ENCODE measurements at regions of chr5 and their contacts with region 1.

Region 1: GRCh38 chr5:76601470-76601869 is 21.7 kb downstream of the F2RL2 start:
- DNase-seq: no peak
- ATAC-seq: peak; percentile 84
- H3K4me3 ChIP-seq: no peak overlapping the region
- H3K27ac ChIP-seq: no peak overlapping the region
- H3K4me1 ChIP-seq: no peaks in the 10 kb centered on the region
- H3K27me3 ChIP-seq: no peaks in the 10 kb centered on the region
- CTCF ChIP-seq: peak; percentile 72

Region 2: GRCh38 chr5:76457674-76458485 is 143.6 kb before region 1 on chr5:
- CTCF ChIA-PET with region 1: no interaction called
- POLR2A ChIA-PET with region 1: no interaction called
- in situ Hi-C with region 1: no loop called
- intact Hi-C with region 1: no loop called
- DNase-seq: no peak
- ATAC-seq: no peak
- H3K4me3 ChIP-seq: no peak overlapping the region
- H3K27ac ChIP-seq: no peak overlapping the region
- H3K4me1 ChIP-seq: no peaks in the 10 kb centered on the region
- H3K27me3 ChIP-seq: peaks cover 12% of the 10 kb centered on the region; the same call in 1 of the 2 replicates
- CTCF ChIP-seq: no peak

Region 3: DNA sequence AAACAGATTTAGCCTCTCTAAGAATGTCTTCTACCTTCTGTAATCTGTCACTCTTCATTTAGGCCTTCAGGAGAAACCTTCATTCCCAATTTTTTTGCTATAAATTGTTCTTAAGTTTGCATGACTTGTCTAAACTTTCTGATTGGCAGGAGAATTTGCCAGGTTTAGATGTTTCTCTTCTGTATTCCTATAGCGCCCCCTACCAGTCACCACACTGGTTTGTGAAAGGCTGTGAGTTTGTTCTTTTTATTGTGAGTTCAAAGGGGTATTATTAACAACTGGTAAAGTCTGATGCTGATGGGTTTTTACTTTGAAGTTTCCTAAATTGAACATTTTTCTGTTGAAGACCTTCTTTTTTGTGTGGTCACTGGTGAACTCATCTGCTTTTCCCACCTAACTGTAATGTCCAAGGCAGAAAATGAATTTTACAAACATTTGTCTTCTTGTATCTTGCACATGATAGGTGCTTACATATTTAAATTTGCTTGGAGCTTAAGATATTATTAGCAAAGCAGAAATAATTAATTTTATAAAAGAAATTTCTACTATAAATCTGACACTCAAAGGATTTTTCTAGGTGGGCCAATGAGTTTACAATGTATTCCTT is 40.1 kb after region 1 on chr5:
- CTCF ChIA-PET with region 1: no interaction called
- POLR2A ChIA-PET with region 1: no interaction called
- in situ Hi-C with region 1: no loop called
- intact Hi-C with region 1: loop called (anchors 1 kb)
- DNase-seq: peak; percentile 33
- ATAC-seq: no peak
- H3K4me3 ChIP-seq: no peak overlapping the region
- H3K27ac ChIP-seq: no peak overlapping the region
- H3K4me1 ChIP-seq: no peaks in the 10 kb centered on the region
- H3K27me3 ChIP-seq: no peaks in the 10 kb centered on the region
- CTCF ChIP-seq: peak; percentile 74; the same call in 1 of the 2 replicates

Region 4: GRCh38 chr5:76715736-76716455 is 114.4 kb after region 1 on chr5 and contains the start of gene F2R:
- CTCF ChIA-PET with region 1: interaction called, 20 read pairs
- POLR2A ChIA-PET with region 1: no interaction called
- in situ Hi-C with region 1: no loop called
- intact Hi-C with region 1: no loop called
- DNase-seq: no peak
- ATAC-seq: peak; percentile 92
- H3K4me3 ChIP-seq: peak within 1 kb of the TSS; percentile 83 to 91
- H3K27ac ChIP-seq: peak within 1 kb of the TSS; percentile 80
- H3K4me1 ChIP-seq: peaks cover 12% of the 10 kb centered on the region; the same call in 1 of the 2 replicates
- H3K27me3 ChIP-seq: peaks cover 2% of the 10 kb centered on the region; the same call in 1 of the 2 replicates
- CTCF ChIP-seq: peak; percentile 87
- total RNA-seq, gene F2R: 26.0 TPM

Region 5: DNA sequence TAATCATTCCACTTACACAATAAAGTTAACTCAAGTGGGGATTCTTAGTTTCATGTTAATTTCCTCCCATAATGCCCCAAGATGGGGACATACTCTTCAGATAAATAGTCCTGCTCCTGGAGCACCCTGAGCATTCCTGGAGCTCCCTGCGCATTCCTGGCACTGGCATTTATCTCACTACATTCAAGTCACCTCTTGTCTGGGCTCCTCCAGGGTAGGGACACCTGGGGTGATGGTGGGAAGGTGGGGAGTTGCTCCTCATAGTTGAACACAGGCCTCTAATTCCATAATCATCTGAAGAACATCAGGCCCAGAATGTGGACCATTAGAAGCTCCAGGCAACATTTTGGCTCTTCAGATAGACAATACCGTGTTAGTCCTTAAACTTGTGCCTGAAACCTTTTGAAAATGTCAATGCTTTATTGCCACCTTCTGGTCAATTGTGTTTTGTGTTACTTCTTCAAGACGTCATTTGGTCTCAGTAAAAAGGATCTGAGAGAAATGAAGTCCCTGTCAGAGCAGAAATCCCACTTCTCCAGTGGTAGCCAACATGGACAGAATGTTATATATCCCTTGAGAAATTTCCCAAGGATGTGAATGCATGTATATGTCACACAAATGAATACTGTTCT is 414.6 kb after region 1 on chr5:
- CTCF ChIA-PET with region 1: interaction called, 3 read pairs
- POLR2A ChIA-PET with region 1: no interaction called
- in situ Hi-C with region 1: no loop called
- intact Hi-C with region 1: loop called (anchors 10 kb)
- DNase-seq: peak; percentile 39
- ATAC-seq: peak; percentile 90
- H3K4me3 ChIP-seq: no peak overlapping the region
- H3K27ac ChIP-seq: no peak overlapping the region
- H3K4me1 ChIP-seq: no peaks in the 10 kb centered on the region
- H3K27me3 ChIP-seq: 0 out of 2 replicates have a peak, but pooled peaks cover 2% of the 10 kb centered on the region
- CTCF ChIP-seq: peak; percentile 50